SK-N-SH (cell line): ENCODE measurements at regions of chr5 and their contacts with region 1.

Region 1: DNA sequence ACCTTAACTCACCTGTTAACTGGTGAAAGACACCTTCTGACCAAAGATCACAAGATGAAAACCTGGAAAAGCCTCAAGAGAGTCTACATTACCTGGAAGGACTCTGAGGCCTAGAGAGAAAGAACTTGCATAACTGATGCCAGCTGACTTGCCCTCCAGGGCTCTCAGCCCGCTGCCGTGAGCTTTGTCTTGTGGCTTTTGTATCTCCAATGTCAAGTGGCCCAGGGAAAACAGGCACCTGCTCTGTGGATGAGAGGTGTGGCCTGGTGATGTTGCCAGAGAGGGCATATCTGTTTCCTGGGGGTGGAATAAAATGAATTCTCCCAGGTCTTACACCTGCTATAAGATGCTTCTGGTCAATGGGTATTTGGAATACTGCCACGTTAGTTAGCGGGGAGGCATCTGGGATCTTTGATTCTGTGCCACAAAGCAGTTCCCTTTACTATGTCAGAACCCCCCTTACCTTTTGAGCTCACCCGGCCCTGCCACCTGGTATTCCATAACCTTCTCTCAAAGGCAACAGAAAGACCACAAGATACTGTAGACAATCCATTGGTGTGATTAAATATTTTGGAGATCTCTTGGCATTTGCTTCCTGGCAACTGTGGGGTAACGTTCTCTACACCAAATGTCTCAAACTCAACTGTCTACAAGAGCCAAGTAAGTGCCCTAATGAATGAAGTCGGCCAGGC is 54.9 kb upstream of the N4BP3 start:
- DNase-seq: no peak
- H3K4me3 ChIP-seq: no peak overlapping the region
- H3K27ac ChIP-seq: no peak overlapping the region
- H3K4me1 ChIP-seq: no peaks in the 10 kb centered on the region
- H3K27me3 ChIP-seq: peaks cover 9% of the 10 kb centered on the region; the same call in 1 of the 2 replicates
- CTCF ChIP-seq: no peak
- EP300 ChIP-seq: no peak
- RAD21 ChIP-seq: no peak

Region 2: DNA sequence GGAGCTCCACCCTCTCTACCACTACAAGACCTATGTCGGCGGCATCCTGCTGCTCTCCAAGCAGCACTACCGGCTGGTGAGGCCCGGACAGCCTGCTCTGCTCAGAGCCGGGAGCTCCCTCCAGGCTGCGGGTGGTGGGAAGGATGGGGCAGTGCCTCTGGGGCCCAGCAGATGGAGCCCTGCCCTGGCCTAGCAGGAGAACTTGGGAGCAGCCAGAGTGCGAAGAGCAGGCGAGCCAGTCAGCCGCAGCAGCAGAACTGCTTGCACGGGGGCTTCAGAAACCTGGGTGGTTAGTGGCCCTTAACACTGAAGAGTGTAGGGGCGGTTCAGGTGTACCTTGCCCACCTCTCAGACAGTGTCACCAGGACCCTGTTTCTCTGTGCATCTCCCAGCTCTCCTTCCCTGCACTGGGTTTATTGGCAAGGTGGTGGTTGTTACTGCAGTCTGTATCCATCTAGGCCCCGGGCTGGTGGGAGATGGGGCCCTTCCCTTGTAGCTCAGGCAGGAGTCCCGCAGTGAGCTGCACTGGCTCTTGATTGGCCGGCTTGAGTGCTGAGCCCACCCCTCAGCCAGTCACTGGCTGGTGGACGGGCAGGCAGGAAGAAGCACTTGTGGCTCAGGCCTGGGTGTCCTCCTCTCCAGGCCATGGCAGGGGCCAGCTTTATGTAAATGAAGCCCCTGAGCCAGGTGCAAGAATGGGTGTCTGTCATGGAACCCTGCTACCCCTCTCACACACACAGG is 450.8 kb before region 1 on chr5:
- CTCF ChIA-PET with region 1: interaction called, 13 read pairs
- POLR2A ChIA-PET with region 1: no interaction called
- DNase-seq: peak; percentile 93
- H3K4me3 ChIP-seq: no peak overlapping the region
- H3K27ac ChIP-seq: no peak overlapping the region
- H3K4me1 ChIP-seq: peaks cover 0 to 10% of the 10 kb centered on the region in 2 experiments; a peak in 1 of 4 replicates
- H3K27me3 ChIP-seq: no peaks in the 10 kb centered on the region
- CTCF ChIP-seq: peak; percentile 80
- EP300 ChIP-seq: no peak
- RAD21 ChIP-seq: peak; percentile 75